Thyroid gland (tissue), 4 donors: ENCODE measurements at regions of chr11 and their contacts with region 1.

Region 1: DNA sequence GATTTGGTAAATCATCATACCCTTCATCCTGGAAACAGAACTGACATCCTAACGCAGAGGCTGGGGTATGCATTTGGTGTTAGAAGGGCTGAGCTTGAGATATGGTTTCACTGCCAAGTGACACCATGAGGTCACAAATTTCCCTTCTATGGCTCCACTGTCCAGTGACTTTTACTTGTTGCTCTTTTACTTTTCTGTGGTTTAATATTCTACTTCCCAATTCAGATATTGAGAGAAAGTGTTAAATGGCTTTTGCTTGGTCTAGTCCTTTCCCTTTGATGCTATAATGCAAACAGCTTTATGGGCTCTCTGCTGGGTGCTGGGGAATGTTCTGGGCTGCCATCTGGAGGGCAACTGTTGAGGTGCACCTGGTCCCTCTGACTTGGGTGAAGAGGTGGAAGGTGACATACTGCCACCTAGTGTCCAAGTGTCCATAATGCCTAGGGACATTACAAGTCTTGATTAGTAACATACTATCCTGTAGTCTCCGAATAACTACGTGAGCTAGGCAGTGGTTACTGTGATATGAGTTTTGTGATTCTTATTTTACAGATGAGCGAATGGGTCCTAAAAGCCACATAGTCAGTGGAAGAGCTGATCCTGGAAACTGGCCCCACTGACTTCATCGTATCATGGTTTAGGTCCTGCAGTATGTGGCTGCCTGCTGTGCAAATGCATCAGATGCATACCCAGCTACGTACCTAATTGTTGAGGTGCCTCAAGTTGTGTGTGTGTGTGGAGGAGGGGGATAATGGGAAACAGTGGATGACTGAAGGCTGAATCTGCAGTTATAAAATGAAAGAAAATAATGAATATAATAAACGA is 149.1 kb upstream of the RAG2 start:
- DNase-seq: peak; percentile 87
- H3K4me3 ChIP-seq: no peak overlapping the region
- H3K27ac ChIP-seq: no peak overlapping the region
- H3K4me1 ChIP-seq: no peaks in the 10 kb centered on the region
- H3K27me3 ChIP-seq: no peaks in the 10 kb centered on the region
- CTCF ChIP-seq: peak; percentile 84 to 99 (median 98)
- POLR2A ChIP-seq: no peak

Region 2: GRCh38 chr11:36702330-36703055 is 44.6 kb before region 1 on chr11:
- intact Hi-C with region 1: loop called (anchors 5 kb)
- DNase-seq: peak; percentile 19 to 20
- H3K4me3 ChIP-seq: no peak overlapping the region
- H3K27ac ChIP-seq: no peak overlapping the region
- H3K4me1 ChIP-seq: no peaks in the 10 kb centered on the region
- H3K27me3 ChIP-seq: no peaks in the 10 kb centered on the region
- CTCF ChIP-seq: peak; percentile 33 to 97 (median 86)
- POLR2A ChIP-seq: no peak